Activated CD4-positive, alpha-beta memory T cell treated with anti-CD3 and anti-CD28 coated beads for 36 hours (primary cell): ENCODE measurements at regions of chr21 and their contacts with region 1.

Region 1: DNA sequence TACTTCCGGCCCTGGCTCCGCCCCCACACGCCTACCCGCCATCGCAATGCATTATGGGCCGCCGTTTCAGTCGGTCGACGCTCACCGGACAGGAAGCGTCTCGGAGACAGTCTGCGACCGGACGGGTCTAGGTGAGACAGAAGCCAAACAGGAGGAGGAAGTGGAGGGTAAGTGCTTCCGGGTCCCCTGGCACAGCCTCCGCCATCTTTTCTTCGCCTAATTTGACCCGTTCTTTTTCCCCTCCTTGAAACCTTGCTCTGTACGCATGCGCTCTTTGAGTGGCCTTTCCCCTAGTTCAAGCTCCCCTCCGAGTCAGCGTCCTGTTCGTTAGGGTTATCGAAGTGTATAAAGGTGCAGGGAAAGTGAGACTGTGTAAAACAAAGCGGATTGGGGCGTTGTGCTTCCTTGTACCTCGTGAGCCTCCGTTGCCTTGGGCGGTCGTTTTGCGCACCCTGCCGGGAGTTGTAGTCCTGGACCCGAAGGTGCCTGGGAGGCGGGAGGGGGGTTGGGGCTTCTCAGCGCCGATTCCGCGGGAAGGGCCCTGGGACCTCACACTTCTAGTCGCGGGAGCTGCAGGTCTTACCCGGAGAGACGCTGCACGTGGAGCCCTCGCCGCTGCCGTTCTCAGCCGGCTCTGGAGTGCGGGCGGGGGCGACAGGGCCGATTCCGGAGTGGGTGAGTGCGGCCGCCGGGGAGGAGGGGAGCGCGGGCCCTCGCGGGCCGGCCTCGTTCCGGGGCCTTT is at the starts of genes ATP5PF and GABPA:
- DNase-seq: peak; percentile 99
- H3K4me3 Mint-ChIP-seq: peak within 1 kb of the TSS; percentile 98
- H3K27ac Mint-ChIP-seq: peak within 1 kb of the TSS; percentile 100
- H3K4me1 Mint-ChIP-seq: peaks cover 52% of the 10 kb centered on the region
- H3K27me3 Mint-ChIP-seq: peaks cover 1% of the 10 kb centered on the region
- total RNA-seq, gene ATP5PF: 150 to 151 TPM
- total RNA-seq, gene GABPA: 22.3 to 24.7 TPM

Region 2: DNA sequence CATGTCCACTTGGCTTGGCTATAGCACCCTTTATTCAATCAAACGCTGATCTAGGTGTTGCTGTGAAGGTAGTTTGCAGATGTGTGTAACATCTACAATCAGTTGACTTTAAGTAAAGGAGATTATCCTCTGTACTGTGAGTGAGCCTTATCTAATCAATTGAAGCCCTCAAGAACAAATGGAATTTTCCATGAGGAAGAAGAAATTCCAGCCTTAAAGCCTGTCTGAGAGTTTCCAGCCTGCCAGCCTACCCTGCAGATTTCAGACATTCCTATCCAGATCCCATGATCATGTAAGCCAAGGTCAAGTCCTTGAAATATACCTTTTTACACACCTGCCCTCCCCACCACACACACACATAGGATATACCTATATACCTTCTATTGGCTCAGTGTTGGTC is 824.5 kb before region 1 on chr21:
- CTCF ChIA-PET with region 1: no interaction called
- POLR2A ChIA-PET with region 1: no interaction called
- intact Hi-C with region 1: no loop called
- DNase-seq: no peak
- H3K4me3 Mint-ChIP-seq: no peak overlapping the region
- H3K27ac Mint-ChIP-seq: no peak overlapping the region
- H3K4me1 Mint-ChIP-seq: no peaks in the 10 kb centered on the region
- H3K27me3 Mint-ChIP-seq: no peaks in the 10 kb centered on the region

Region 3: GRCh38 chr21:25421327-25422028 is 313.6 kb before region 1 on chr21:
- CTCF ChIA-PET with region 1: no interaction called
- POLR2A ChIA-PET with region 1: no interaction called
- intact Hi-C with region 1: loop called (anchors 1 kb)
- DNase-seq: peak; percentile 79
- H3K4me3 Mint-ChIP-seq: peak overlapping the region; percentile 67
- H3K27ac Mint-ChIP-seq: peak overlapping the region; percentile 89
- H3K4me1 Mint-ChIP-seq: peaks cover 62% of the 10 kb centered on the region
- H3K27me3 Mint-ChIP-seq: no peaks in the 10 kb centered on the region

Region 4: GRCh38 chr21:25561668-25562641 is 173.1 kb before region 1 on chr21:
- CTCF ChIA-PET with region 1: no interaction called
- POLR2A ChIA-PET with region 1: no interaction called
- intact Hi-C with region 1: loop called (anchors 2 kb)
- DNase-seq: peak; percentile 89
- H3K4me3 Mint-ChIP-seq: peak overlapping the region; percentile 80
- H3K27ac Mint-ChIP-seq: peak overlapping the region; percentile 94
- H3K4me1 Mint-ChIP-seq: peaks cover 52% of the 10 kb centered on the region
- H3K27me3 Mint-ChIP-seq: no peaks in the 10 kb centered on the region

Region 5: DNA sequence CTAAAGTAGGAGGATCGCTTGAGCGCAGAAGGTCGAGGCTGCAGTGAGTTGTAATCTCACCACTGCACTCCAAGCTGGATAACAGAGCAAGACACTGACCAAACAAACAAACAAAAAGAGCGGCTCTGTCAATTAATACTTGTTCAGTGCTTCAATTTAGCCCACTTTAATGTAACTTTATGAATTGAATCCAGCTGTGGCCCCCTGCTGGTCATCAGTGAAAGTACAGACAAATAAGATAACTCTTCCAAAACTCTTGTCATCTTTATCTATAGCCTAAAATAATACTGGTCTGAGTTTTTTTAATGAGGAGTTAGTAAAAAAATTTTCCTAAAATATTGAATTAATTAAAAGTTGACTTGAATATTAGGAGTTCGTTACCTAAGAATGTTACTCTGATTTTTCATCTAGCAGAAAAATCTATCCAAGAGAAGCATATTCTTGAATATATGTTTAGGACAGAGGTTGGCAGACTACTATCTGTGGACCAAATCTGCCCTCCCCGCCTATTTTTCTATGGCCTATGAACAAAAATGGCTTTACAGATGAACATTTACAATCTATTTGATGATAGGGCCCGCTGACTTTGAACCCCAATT is 26.5 kb before region 1 on chr21:
- CTCF ChIA-PET with region 1: interaction called, 3 read pairs
- POLR2A ChIA-PET with region 1: interaction called, 4 read pairs
- intact Hi-C with region 1: loop called (anchors 2 kb)
- DNase-seq: peak; percentile 48
- H3K4me3 Mint-ChIP-seq: no peak overlapping the region
- H3K27ac Mint-ChIP-seq: no peak overlapping the region
- H3K4me1 Mint-ChIP-seq: peaks cover 4% of the 10 kb centered on the region
- H3K27me3 Mint-ChIP-seq: no peaks in the 10 kb centered on the region

Region 6: GRCh38 chr21:25801217-25802014 is 66.3 kb after region 1 on chr21:
- CTCF ChIA-PET with region 1: interaction called, 6 read pairs
- POLR2A ChIA-PET with region 1: no interaction called
- intact Hi-C with region 1: loop called (anchors 1 kb)
- DNase-seq: peak; percentile 93
- H3K4me3 Mint-ChIP-seq: no peak overlapping the region
- H3K27ac Mint-ChIP-seq: no peak overlapping the region
- H3K4me1 Mint-ChIP-seq: peaks cover 6% of the 10 kb centered on the region
- H3K27me3 Mint-ChIP-seq: peaks cover 16% of the 10 kb centered on the region

Region 7: GRCh38 chr21:25871566-25871965 is 136.5 kb after region 1 on chr21:
- CTCF ChIA-PET with region 1: no interaction called
- POLR2A ChIA-PET with region 1: no interaction called
- intact Hi-C with region 1: no loop called
- DNase-seq: peak; percentile 31
- H3K4me3 Mint-ChIP-seq: no peak overlapping the region
- H3K27ac Mint-ChIP-seq: no peak overlapping the region
- H3K4me1 Mint-ChIP-seq: no peaks in the 10 kb centered on the region
- H3K27me3 Mint-ChIP-seq: no peaks in the 10 kb centered on the region